H1 (cell line): ENCODE measurements at regions of chr22 and their contacts with region 1.

Region 1: DNA sequence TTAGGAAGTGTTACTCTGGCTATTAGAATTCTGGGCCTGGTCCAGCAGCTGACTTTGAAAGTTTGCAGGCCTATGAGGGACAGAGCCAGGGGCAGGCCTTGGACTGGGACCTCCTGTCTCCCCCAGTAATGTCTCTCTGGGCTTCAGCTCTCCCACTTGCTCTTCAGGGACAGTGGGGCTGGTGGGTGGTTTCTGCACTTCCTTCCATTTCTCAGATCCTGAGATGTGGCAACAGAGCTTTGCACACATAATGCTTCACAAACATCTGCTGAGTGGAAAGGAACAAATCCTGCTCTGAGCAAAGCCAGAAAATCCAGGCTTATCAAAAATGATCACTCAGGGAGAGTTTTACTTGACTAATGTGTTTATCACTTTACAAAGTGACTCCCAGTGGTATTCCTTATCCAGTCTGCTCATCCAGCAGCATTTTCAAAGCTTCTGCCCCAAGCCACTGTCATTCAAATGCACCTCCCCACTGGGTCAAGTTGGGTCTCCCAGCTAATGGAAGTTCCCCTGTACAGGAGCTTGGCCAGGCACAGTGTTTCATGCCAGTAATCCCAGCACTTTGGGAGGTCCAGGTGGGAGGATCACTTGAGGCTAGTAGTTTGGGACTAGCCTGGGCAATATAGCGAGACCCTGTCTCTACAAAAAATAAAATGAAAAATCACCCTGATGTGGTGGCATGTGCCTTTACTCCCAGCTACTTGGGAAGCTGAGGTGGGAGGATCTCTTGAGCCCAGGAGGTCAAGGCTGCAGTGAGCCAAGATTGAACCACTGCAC is 13.5 kb upstream of the OSBP2 start:
- DNase-seq: no peak
- H3K4me3 ChIP-seq: no peak overlapping the region
- H3K27ac ChIP-seq: no peak overlapping the region
- H3K4me1 ChIP-seq: peaks cover 0 to 9% (median 3%) of the 10 kb centered on the region in 4 experiments; a peak in 5 of 7 replicates
- H3K27me3 ChIP-seq: no peaks in the 10 kb centered on the region; a peak in 1 of 7 replicates
- CTCF ChIP-seq: no peak
- EP300 ChIP-seq: no peak
- POLR2A ChIP-seq: no peak
- RAD21 ChIP-seq: no peak

Region 2: DNA sequence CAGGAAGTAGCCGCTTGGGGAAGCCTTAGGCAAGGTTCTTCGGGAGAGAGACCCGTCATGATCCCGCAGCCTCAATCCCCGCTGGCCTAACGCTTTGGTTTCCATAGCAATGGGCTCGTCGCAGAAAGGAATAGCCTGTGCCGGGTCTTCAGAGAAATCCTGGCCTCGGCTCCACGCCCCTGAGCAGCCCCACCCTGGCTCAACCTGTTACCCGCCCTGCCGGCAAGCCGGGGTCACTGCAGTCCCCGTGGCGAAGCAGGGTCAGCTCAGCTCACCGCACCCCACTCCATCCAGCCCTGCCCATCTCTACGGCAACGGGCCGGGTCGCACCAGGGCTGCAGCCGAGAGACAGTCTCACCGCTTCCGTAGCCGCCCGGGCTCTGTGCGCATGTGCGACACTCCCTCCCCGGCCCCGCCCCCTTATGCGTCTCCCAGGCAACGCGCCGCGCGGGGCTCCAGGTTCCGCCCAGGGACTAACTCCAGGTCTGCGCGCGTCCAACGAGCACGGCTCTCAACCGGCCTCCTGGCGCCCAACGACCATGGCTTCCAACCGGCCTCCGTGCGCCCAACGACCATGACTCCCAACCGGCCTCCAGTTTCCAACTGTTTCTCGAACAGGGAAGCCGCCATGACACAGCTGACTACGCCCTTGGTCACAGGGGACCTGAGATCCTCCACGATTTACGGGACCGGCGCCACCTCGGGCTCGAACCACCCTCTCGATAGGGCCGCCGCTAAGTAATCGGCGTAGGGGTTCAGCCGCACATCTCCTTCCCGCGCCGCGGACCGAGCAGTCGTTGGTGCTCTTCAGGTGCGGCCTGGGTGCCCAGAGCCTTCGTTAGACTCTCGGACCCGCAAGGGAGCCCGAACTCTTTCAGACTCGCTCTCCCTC is 13.4 kb before region 1 on chr22 and contains the start of gene DUSP18:
- CTCF ChIA-PET with region 1: interaction called, 10 read pairs
- POLR2A ChIA-PET with region 1: interaction called, 6 read pairs
- DNase-seq: peak; percentile 94 to 100
- H3K4me3 ChIP-seq: peak within 1 kb of the TSS; percentile 62 to 87 (median 76)
- H3K27ac ChIP-seq: peak within 1 kb of the TSS; percentile 18; the same call in 1 of the 2 replicates
- H3K4me1 ChIP-seq: peaks cover 0 to 2% (median under 1%) of the 10 kb centered on the region in 4 experiments; a peak in 4 of 7 replicates
- H3K27me3 ChIP-seq: peaks cover 0 to 13% (median 8%) of the 10 kb centered on the region in 4 experiments; a peak in 5 of 7 replicates
- CTCF ChIP-seq: peak; percentile 53 to 81 (median 73)
- EP300 ChIP-seq: peak in 1 of 2 experiments; percentile 39; a peak in 1 of 3 replicates
- POLR2A ChIP-seq: peak in 1 of 2 experiments; percentile 48; a peak in 1 of 3 replicates
- RAD21 ChIP-seq: peak in 1 of 2 experiments; percentile 58; a peak in 3 of 4 replicates
- total RNA-seq, gene DUSP18: 2.6 and 3.6 TPM in 2 replicates

Region 3: GRCh38 chr22:30694171-30694639 is 13.0 kb after region 1 on chr22:
- CTCF ChIA-PET with region 1: interaction called, 10 read pairs
- POLR2A ChIA-PET with region 1: interaction called, 4 read pairs
- DNase-seq: peak; percentile 13 to 82
- H3K4me3 ChIP-seq: peak overlapping the region; percentile 51 to 73 (median 68)
- H3K27ac ChIP-seq: peak overlapping the region; percentile 54; the same call in 1 of the 2 replicates
- H3K4me1 ChIP-seq: peaks cover 0 to 6% (median 3%) of the 10 kb centered on the region in 4 experiments; a peak in 4 of 7 replicates
- H3K27me3 ChIP-seq: peaks cover 0 to 17% (median 14%) of the 10 kb centered on the region in 4 experiments; a peak in 6 of 7 replicates
- CTCF ChIP-seq: no peak
- EP300 ChIP-seq: no peak
- POLR2A ChIP-seq: peak in 1 of 2 experiments; percentile 41; a peak in 1 of 3 replicates
- RAD21 ChIP-seq: no peak

Region 4: GRCh38 chr22:30704978-30705377 is 23.8 kb after region 1 on chr22:
- CTCF ChIA-PET with region 1: no interaction called
- POLR2A ChIA-PET with region 1: no interaction called
- DNase-seq: no peak
- H3K4me3 ChIP-seq: no peak overlapping the region
- H3K27ac ChIP-seq: no peak overlapping the region
- H3K4me1 ChIP-seq: peaks cover 0 to 5% (median 2%) of the 10 kb centered on the region in 4 experiments; a peak in 3 of 7 replicates
- H3K27me3 ChIP-seq: no peaks in the 10 kb centered on the region
- CTCF ChIP-seq: no peak
- EP300 ChIP-seq: no peak
- POLR2A ChIP-seq: no peak
- RAD21 ChIP-seq: no peak